Thyroid gland (tissue), 4 donors: ENCODE measurements at regions of chr16 and their contacts with region 1.

Region 1: DNA sequence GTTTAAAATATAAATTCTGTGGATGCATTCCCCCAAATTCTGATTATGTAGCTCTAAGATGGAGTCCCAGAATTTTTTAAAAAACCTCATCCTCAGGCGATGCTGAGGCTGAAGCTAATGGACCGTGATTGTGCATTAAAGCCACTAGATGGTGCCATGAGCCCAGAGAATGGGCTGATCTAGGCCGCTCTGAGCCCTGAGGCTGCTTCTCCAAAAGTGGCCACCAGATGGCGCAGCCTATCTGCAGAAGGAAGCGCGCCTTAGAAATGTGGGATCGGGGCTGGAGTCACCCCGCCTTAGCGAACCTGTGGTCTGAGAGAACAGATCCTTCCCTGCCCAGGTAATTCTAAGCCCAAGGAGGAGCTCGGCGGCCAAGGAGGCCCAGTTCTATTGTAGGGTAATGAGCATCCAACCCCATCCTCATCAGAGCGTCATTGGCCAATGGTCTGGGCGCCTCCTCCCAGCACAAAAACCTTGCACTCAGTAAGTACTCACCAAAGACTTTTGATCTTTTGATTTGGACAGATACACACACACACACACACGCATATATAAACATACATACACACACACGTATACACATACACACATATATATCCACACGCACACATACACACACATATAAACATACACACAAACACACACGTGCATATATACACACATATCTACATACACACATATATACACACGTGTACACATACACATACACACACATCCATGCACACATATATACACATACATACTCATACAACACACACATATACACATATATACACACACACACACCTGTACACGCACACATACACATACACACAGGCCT is 13.7 kb upstream of the MMP2 start:
- DNase-seq: peak; percentile 89
- H3K4me3 ChIP-seq: no peak overlapping the region
- H3K27ac ChIP-seq: no peak overlapping the region
- H3K4me1 ChIP-seq: peaks cover 0 to 2% of the 10 kb centered on the region in 2 donors
- H3K27me3 ChIP-seq: no peaks in the 10 kb centered on the region
- CTCF ChIP-seq: peak; percentile 95 to 100 (median 100)
- POLR2A ChIP-seq: no peak

Region 2: DNA sequence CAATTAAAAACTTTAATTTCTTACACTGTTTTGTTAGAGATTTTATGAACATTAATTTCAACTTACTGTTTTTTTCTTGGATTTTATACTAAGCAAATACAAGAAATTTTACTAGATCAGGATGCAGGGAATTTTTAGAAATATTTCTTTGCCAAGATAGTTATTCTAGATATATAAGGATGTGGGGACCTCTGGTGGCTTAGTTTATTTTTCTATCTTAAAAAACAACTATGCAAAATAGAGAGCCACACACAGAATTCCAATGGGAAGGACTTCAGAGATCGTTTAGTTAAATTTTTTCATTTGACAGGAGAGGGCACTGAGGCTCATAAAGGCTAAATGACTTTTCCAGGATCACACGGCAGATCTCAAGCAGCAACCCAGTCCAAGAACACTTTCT is 78.2 kb after region 1 on chr16:
- intact Hi-C with region 1: loop called (anchors 5 kb)
- DNase-seq: no peak
- H3K4me3 ChIP-seq: no peak overlapping the region
- H3K27ac ChIP-seq: no peak overlapping the region
- H3K4me1 ChIP-seq: no peaks in the 10 kb centered on the region
- H3K27me3 ChIP-seq: no peaks in the 10 kb centered on the region
- CTCF ChIP-seq: peak in 5 of 6 experiments; percentile 16 to 59 (median 45)
- POLR2A ChIP-seq: no peak

Region 3: GRCh38 chr16:55643161-55643970 is 178.1 kb after region 1 on chr16:
- intact Hi-C with region 1: no loop called
- DNase-seq: peak; percentile 10
- H3K4me3 ChIP-seq: no peak overlapping the region
- H3K27ac ChIP-seq: no peak overlapping the region
- H3K4me1 ChIP-seq: no peaks in the 10 kb centered on the region
- H3K27me3 ChIP-seq: no peaks in the 10 kb centered on the region
- CTCF ChIP-seq: no peak
- POLR2A ChIP-seq: no peak

Region 4: GRCh38 chr16:55701442-55702319 is 236.4 kb after region 1 on chr16:
- intact Hi-C with region 1: loop called (anchors 2 kb)
- DNase-seq: peak; percentile 68 to 76
- H3K4me3 ChIP-seq: no peak overlapping the region
- H3K27ac ChIP-seq: no peak overlapping the region
- H3K4me1 ChIP-seq: no peaks in the 10 kb centered on the region
- H3K27me3 ChIP-seq: no peaks in the 10 kb centered on the region
- CTCF ChIP-seq: peak; percentile 17 to 77 (median 66)
- POLR2A ChIP-seq: no peak

Region 5: DNA sequence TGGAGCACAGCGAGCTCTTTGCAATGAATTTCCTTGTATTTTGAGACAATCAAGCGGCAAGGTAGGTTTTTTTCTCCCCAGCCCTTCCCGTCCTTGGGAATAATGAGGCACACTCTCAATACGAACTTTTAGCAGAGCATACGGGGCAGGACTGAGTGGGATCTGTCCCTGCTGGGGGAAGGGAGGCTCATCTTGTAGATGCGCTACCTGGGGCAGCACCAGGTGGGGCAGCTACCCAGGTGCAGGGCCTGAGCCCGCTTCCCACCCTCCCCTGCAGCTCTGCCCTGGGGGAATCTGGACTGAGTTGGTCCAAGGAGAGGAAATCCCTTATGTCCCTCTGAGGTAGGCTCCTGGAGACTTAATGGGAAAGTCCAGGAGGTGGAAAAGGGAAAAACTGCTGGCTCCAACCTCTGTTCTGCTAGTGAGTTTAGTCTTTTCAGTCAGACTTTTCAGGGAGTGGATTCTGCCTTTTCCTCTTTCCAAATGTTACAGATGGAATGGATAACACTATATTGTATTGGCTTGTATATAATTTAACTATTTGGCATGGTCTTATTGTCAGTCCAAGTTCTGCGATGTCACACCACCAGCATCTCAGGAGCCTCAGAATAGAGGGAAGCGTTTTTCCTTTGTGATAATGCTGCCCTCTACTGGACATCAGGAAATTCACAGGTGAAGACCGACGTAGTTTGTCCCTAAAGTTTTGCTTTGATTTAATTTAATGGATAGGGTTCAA is 377.2 kb after region 1 on chr16:
- intact Hi-C with region 1: loop called (anchors 10 kb)
- DNase-seq: peak; percentile 3 to 5
- H3K4me3 ChIP-seq: no peak overlapping the region
- H3K27ac ChIP-seq: no peak overlapping the region
- H3K4me1 ChIP-seq: no peaks in the 10 kb centered on the region
- H3K27me3 ChIP-seq: no peaks in the 10 kb centered on the region
- CTCF ChIP-seq: peak; percentile 55 to 80 (median 66)
- POLR2A ChIP-seq: no peak